GM10248 (cell line): ENCODE measurements at regions of chr17 and their contacts with region 1.

Region 1: DNA sequence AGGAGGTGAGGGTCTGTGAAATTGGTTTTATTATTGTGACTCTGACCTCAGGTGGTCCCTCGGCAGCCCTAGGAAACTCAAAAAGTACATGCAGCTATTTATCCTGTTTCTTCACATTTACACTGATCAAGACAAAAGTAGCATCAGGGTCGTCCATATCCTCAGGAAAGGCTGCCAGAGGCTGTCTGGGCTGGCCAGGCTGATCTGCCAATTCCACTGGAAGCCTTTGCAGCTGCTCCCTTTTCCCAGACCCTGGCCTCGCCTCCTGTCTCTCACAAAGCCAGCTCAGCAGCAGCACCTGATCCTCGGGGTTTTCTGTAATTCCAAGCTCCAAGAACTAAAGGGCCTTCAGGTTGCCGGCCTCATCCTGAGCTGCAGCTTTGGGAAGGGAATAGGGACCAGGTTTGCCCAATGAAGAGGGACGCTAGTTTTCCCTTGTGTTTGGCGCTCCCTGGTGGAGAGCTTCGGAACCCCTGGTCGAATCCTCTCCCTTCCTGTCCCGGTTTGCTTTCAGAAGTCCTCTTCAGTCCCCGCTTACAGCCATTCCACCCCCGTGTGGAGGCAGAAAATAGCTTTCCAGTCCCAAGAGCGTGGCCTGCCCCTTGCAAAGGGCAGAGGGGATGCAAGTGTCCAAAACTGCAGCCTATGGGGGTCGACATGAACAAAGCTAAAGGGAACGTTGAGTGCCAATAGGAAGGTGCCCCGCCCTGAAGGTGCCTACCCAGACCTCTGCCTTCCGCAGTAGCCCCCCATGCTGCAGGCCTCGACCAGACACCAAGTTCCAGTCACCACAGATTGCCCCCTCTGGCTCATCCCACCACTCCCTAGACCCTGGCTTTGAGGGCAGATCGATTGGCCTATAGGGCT is 13.4 kb downstream of the MFSD6L start:
- DNase-seq: peak; percentile 72
- CTCF ChIP-seq: peak; percentile 68

Region 2: DNA sequence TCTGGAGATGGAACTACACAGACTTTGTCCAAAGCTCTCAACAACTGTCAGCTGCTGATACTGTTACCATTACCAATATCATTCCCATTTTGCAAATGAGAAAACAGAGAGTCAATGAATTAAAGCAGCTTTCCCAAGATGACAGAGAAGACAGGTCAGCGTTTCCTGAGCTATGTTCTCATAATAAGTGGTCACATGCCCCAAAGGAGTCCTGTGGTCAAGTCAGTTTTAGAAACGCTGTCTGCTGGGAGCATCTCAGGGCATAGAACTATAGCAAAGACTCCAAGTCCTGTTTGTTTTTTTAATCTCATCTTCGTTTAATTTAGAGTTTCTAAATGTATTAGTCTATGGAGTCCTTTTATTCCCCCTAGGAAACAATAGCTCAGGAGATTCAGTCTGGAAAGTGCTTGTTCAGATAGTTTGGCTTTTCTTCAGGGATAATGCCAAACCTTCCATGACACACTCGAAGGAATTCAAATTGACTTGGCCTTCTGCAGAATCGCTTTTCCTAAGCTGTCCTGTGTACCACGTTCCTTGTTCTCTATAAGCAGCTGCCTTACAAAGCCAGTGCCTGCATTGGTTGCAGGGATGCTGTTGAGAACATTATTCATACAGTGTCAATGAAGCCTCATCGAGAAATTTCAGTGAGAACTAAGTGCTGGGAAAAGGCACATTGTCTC is 53.2 kb before region 1 on chr17:
- CTCF ChIA-PET with region 1: no interaction called
- POLR2A ChIA-PET with region 1: no interaction called
- DNase-seq: no peak
- CTCF ChIP-seq: no peak

Region 3: DNA sequence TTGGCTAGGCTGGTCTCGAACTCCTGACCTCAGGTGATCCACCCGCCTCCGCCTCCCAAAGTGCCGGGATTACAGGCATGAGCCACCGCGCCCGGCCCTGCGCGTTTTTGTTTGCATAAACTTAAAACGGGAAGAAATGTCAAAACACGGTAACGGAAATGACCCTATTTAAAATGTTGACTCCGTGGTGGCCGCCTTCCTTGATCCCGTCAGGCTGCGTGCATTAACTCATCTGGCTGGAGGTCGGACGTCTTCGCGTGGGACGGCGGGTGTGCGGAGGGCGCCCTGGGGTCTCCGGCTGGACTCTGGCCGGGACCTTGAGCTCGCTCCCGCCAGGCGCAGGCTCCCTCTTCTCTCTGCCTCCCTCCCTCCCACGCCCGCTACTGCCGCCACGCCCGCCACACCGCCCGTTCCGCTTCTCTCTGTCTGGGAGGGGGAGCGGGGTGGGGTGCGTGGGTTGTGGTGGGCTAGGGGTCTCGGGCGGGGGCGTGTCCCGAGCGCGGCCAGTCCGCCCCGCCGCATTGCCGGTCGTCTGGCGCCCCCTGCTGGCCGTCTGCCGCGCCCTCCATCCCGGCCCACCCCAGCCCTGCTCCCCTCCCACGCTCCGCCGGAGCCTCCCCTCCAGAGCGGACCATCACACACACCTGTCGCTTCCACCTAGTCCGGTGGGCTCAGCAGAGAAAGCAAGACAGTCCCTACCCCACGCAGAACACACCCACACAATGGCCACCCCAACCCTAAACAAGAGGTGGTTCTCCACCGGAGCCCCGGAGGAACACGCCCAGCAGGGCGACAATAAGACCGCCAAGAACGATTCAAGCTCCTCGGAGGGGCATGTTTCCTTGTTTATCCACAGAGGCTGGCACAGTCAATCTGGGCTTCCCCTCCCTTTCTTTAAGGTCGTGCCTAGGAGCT is 39.9 kb before region 1 on chr17:
- CTCF ChIA-PET with region 1: interaction called, 18 read pairs
- POLR2A ChIA-PET with region 1: interaction called, 3 read pairs
- DNase-seq: peak; percentile 92
- CTCF ChIP-seq: peak; percentile 79

Region 4: DNA sequence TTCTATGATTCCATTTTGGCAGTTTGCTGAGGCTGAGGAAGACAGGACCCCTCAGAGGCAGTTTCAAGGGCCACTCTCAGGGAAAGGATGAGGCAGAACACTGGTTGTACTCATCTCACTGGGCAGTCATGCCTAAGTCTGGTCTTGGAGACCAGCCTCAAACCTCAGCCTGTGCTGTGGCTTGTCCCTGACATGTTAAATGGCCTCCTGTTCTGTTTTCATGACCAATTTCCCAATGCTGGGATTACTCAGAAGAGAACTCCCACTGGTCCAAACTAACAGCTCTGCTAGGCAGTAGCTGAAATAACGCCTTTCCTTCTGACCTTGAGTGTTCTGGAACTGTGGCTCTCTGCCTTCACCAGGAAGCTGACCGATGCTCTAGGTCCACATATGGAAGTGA is 19.0 kb before region 1 on chr17:
- CTCF ChIA-PET with region 1: interaction called, 13 read pairs
- POLR2A ChIA-PET with region 1: no interaction called
- DNase-seq: no peak
- CTCF ChIP-seq: no peak

Region 5: GRCh38 chr17:8806926-8807550 is 21.3 kb after region 1 on chr17:
- CTCF ChIA-PET with region 1: interaction called, 12 read pairs
- POLR2A ChIA-PET with region 1: interaction called, 7 read pairs
- DNase-seq: peak; percentile 90
- CTCF ChIP-seq: no peak

Region 6: GRCh38 chr17:8894673-8895578 is 109.1 kb after region 1 on chr17:
- CTCF ChIA-PET with region 1: interaction called, 13 read pairs
- POLR2A ChIA-PET with region 1: no interaction called
- DNase-seq: peak; percentile 79
- CTCF ChIP-seq: peak; percentile 72